Aorta (tissue), 5 donors: ENCODE measurements at regions of chr1 and their contacts with region 1.

Region 1: GRCh38 chr1:117051224-117052064 is 8.7 kb upstream of the TTF2 start:
- DNase-seq: peak in 1 of 2 donors; percentile 54
- ATAC-seq: peak; percentile 60
- H3K4me3 ChIP-seq: no peak overlapping the region
- H3K27ac ChIP-seq: no peak overlapping the region
- H3K4me1 ChIP-seq: no peaks in the 10 kb centered on the region
- H3K27me3 ChIP-seq: no peaks in the 10 kb centered on the region

Region 2: DNA sequence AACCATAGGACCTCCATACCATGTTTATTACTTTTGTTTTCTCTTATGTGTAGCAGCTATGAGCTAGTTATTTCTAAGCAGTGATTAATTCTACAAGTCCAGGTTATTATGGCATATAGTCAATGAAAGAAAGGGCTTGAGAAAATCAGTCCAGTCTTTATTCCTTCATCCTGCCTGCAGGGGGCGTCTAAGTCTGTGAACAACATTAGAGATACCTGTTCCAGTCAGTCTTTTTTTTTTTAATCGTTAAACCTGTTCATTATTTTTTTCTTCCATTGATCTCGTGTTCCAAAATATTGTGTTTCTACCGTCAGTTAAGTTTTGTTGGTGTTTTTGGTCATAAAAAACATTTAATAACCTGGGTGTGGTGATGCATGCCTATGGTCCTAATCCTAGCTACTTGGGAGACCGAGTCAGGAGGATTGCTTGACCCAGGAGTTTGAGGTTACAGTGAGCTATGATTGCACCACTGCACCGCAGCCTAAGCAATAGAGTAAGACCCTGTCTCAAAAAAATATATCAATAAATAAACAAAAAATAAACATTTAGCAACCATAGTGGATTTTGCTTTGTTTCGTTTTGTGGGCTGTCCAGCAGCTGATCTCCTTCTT is 326.6 kb before region 1 on chr1:
- intact Hi-C with region 1: loop called in 1 of 2 experiments (anchors 5 kb)
- DNase-seq: peak in 1 of 2 donors; percentile 58
- ATAC-seq: no peak
- H3K4me3 ChIP-seq: no peak overlapping the region
- H3K27ac ChIP-seq: no peak overlapping the region
- H3K4me1 ChIP-seq: no peaks in the 10 kb centered on the region
- H3K27me3 ChIP-seq: no peaks in the 10 kb centered on the region

Region 3: DNA sequence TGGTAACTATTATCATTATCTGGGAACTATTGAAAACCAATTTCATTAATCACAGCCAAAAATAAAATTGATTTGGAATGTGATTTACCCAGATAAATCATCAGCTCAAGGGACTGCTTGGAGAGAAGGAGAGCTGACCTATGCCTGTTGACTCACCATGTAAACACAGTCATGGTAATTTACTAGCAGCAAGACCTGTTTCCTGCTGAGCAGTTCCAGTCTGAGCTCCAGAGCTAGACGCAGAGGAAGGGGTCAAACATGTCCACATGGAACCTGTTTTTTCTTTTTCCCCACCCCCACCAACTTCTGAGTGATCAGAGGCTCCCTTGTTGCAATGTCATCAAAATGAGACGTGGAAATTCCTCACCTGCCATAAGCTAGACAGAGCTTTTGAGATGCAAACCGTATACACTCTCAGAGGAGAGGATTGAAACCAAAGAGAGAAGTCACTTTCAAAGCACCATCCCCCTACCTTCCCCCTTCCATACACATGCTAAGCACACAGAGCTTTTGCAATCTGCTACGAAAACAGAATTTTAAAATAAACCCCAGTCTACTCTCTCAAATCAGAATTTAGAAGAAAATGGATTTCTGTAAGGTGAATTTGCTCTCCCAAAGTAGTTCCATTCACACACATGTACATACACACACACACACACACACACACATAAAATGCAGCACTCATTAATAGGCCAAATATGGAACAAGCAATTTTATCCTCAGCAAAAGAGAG is 197.6 kb before region 1 on chr1:
- intact Hi-C with region 1: loop called in 1 of 2 experiments (anchors 5 kb)
- DNase-seq: no peak
- ATAC-seq: no peak
- H3K4me3 ChIP-seq: no peak overlapping the region
- H3K27ac ChIP-seq: no peak overlapping the region
- H3K4me1 ChIP-seq: peaks cover 0 to 2% of the 10 kb centered on the region in 2 donors
- H3K27me3 ChIP-seq: no peaks in the 10 kb centered on the region

Region 4: DNA sequence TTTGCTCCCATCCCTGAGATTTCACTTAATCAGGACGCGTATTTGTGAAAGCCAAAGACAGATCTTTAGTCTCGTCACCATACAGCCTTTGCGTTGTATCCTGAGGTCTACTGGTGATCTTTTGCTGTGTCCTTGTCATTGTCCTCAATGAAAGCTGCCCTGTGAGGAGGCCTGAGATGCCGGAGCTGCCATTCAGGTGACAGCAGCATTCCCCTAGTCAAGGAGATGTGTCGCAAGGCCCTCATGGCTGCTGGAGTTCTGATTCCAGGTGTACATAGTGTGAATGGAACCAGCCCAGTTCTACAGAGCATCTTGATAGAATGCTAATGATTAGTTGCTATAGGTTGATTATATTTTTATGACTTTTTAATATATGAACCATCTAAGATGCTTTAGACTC is 32.8 kb after region 1 on chr1:
- intact Hi-C with region 1: no loop called
- DNase-seq: no peak
- ATAC-seq: no peak
- H3K4me3 ChIP-seq: no peak overlapping the region
- H3K27ac ChIP-seq: no peak overlapping the region
- H3K4me1 ChIP-seq: no peaks in the 10 kb centered on the region
- H3K27me3 ChIP-seq: no peaks in the 10 kb centered on the region

Region 5: GRCh38 chr1:117156505-117156904 is 105.1 kb after region 1 on chr1:
- intact Hi-C with region 1: no loop called
- DNase-seq: no peak
- ATAC-seq: no peak
- H3K4me3 ChIP-seq: no peak overlapping the region
- H3K27ac ChIP-seq: no peak overlapping the region
- H3K4me1 ChIP-seq: no peaks in the 10 kb centered on the region
- H3K27me3 ChIP-seq: no peaks in the 10 kb centered on the region